Panc1 (cell line): ENCODE measurements at regions of chr16 and their contacts with region 1.

Region 1: GRCh38 chr16:9148374-9149015 is 57.1 kb downstream of the HAPSTR1 start:
- DNase-seq: no peak
- ATAC-seq: no peak
- H3K4me3 ChIP-seq: no peak overlapping the region
- H3K27ac ChIP-seq: no peak overlapping the region
- H3K4me1 ChIP-seq: no peaks in the 10 kb centered on the region
- H3K27me3 ChIP-seq: no peaks in the 10 kb centered on the region
- CTCF ChIP-seq: no peak

Region 2: GRCh38 chr16:9039210-9039609 is 109.3 kb before region 1 on chr16:
- CTCF ChIA-PET with region 1: no interaction called
- POLR2A ChIA-PET with region 1: no interaction called
- in situ Hi-C with region 1: no loop called
- intact Hi-C with region 1: no loop called
- DNase-seq: no peak
- ATAC-seq: peak; percentile 67
- H3K4me3 ChIP-seq: no peak overlapping the region
- H3K27ac ChIP-seq: no peak overlapping the region
- H3K4me1 ChIP-seq: peaks cover 16% of the 10 kb centered on the region
- H3K27me3 ChIP-seq: no peaks in the 10 kb centered on the region
- CTCF ChIP-seq: no peak

Region 3: GRCh38 chr16:9275377-9275776 is 126.9 kb after region 1 on chr16:
- CTCF ChIA-PET with region 1: interaction called, 10 read pairs
- POLR2A ChIA-PET with region 1: no interaction called
- in situ Hi-C with region 1: no loop called
- intact Hi-C with region 1: no loop called
- DNase-seq: no peak
- ATAC-seq: no peak
- H3K4me3 ChIP-seq: no peak overlapping the region
- H3K27ac ChIP-seq: no peak overlapping the region
- H3K4me1 ChIP-seq: no peaks in the 10 kb centered on the region
- H3K27me3 ChIP-seq: 0 out of 2 replicates have a peak, but pooled peaks cover 2% of the 10 kb centered on the region
- CTCF ChIP-seq: no peak